A673 (cell line): ENCODE measurements at regions of chr19 and their contacts with region 1.

Region 1: DNA sequence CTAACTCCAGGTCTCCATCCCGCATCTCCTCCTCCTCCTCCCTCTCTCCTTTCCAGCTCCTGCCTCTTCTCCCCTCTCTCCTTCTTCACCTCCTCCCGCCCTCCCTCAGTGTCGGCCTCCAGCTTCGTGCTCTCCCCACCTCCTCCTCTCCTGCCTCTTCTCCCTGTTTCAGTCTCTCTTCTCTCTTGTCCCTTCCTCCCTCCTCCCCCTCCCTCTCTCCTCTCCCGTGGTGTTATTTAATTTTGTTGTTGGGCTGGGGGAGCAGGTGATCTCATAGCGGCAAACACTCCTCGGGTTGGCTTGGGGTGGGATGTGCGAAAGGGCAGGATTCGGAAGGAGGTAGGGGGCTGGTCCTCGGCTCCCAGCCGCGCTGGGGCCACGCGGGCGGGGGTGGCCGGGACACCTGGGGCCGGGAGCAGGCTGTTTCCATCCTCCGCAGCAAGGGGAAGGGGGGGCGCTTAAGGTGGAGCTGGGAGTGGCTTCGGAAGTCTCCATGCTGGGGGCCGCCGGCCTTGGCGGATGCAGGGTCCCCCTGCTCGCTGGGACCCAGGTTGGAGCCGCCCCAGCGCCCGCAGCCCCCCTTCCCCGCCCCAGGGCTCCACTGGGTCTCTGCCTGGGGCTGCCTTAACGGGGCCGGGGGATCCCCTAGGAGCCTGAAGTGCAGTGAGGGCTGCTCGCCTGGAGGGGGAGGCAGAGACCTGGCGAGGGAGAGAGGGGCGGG is at the start of gene CA11:
- DNase-seq: peak; percentile 97
- H3K4me3 ChIP-seq: peak within 1 kb of the TSS; percentile 62
- H3K27ac ChIP-seq: peak within 1 kb of the TSS; percentile 77
- H3K4me1 ChIP-seq: peaks cover 26% of the 10 kb centered on the region
- H3K27me3 ChIP-seq: no peaks in the 10 kb centered on the region
- CTCF ChIP-seq: peak; percentile 94
- total RNA-seq, gene CA11: 36.8 and 38.2 TPM in 2 replicates

Region 2: DNA sequence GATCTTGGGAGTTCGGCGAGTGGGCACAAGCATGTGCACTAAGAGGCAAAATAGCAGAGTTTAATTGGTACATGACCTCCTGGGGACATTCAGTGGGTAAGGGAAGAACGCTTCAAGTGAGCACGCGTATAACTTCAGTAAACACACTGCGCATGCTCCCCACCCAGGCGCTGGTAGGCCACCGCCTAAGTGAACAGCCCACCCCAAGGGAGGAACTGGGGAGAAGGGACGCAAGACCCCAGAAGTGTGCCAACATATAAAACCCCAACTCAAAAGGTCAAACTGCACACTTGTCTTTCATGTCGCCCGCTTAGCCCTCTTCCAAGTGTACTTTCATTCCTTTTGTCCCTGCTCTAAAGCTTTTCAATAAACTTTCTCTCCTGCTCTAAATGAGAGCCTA is 37.2 kb after region 1 on chr19:
- CTCF ChIA-PET with region 1: no interaction called
- POLR2A ChIA-PET with region 1: no interaction called
- intact Hi-C with region 1: no loop called
- DNase-seq: no peak
- H3K4me3 ChIP-seq: no peak overlapping the region
- H3K27ac ChIP-seq: no peak overlapping the region
- H3K4me1 ChIP-seq: no peaks in the 10 kb centered on the region
- H3K27me3 ChIP-seq: no peaks in the 10 kb centered on the region
- CTCF ChIP-seq: no peak

Region 3: DNA sequence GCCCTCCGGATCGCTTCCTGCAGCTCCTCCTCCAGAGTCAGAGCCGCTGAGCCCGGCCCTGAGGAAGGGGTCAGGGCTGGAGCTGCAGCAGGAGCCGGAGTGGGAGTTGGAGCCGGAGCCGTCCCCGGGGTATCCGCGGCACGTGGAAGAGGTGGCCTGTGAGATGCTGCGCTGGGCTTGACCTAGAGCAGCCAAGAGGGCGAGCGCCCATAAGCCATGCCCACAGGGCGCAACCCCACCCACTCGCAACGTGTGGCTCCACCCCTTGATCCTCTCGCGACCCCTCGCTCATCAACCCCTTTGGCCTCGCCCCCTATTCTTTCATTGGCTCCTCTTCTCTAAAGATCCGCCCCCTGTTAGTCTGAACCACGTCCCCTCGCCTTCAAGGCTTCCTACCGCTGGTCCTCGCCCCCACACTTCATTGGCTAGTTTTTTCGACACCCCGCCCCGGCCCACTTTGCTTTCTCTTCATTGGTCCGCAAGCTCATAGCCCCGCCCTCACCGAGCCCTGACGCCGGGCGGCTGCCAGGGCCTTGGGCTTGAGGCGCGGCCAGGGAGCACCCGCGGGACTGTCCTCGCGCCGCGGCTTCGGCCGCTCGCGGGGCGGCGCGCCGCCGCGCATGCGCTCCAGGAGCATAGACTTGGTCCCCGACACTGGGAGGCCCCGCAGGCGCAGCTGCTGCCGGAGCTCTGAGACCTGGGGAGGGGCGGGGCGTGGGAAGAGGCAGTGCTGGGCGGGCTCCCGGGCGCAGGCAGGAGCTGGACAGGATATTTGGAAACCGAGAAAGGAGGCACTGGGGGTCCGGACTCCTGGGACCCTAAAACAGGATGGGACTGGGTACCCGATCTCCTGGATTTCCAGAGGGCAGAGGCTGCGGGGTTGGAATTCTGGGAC is 68.0 kb after region 1 on chr19:
- CTCF ChIA-PET with region 1: interaction called, 4 read pairs
- POLR2A ChIA-PET with region 1: no interaction called
- intact Hi-C with region 1: loop called (anchors 5 kb)
- DNase-seq: peak; percentile 100
- H3K4me3 ChIP-seq: peak overlapping the region; percentile 66
- H3K27ac ChIP-seq: peak overlapping the region; percentile 88
- H3K4me1 ChIP-seq: peaks cover 33% of the 10 kb centered on the region
- H3K27me3 ChIP-seq: no peaks in the 10 kb centered on the region
- CTCF ChIP-seq: no peak

Region 4: DNA sequence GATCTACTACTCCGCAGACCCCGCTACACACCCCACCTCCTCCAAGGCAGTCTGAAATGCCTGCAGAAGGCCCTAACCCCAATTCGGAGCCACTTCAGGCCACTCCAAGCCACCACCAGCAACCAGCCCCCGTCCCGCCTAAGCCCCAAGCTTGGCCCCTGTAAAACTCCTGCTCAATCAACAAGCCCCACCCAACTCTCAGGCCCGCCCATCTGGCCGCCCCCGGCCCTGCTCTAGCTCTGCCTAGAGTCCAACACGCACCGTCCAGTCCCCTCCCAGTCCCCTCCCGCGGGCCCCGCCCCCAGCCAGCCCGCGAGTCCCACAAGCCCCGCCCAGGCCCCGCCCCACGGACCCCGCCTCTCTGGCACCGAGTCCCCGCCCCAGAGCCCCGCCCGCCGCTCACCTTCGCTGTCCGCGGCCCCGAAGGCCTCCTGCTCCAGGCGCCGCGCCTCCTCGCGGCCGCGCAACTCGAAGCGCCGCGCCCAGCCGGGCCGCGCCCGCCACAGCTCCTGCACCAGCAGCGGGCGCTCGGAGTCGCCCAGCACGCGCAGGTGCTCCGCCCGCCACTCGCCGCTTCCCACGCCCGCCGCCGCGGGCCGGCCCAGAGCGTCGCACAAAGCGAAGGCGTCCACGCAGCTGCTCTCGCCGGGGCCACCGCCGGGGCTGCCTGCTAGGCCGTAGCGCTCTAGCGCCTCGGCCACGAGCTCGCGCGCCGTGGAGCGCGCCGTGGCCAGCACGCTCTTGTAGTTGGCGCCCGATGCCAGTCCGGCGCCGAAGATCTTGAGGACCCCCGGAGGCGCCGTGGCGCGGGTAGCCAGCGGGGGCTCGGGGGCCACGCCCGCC is 92.6 kb after region 1 on chr19:
- CTCF ChIA-PET with region 1: no interaction called
- POLR2A ChIA-PET with region 1: no interaction called
- intact Hi-C with region 1: loop called (anchors 5 kb)
- DNase-seq: peak; percentile 94
- H3K4me3 ChIP-seq: peak overlapping the region; percentile 59
- H3K27ac ChIP-seq: peak overlapping the region; percentile 73
- H3K4me1 ChIP-seq: peaks cover 21% of the 10 kb centered on the region
- H3K27me3 ChIP-seq: no peaks in the 10 kb centered on the region
- CTCF ChIP-seq: peak; percentile 45; the same call in 1 of the 2 replicates

Region 5: GRCh38 chr19:48835734-48836088 is 189.6 kb after region 1 on chr19:
- CTCF ChIA-PET with region 1: interaction called, 3 read pairs
- POLR2A ChIA-PET with region 1: no interaction called
- intact Hi-C with region 1: loop called (anchors 5 kb)
- DNase-seq: peak; percentile 88
- H3K4me3 ChIP-seq: peak overlapping the region; percentile 41
- H3K27ac ChIP-seq: no peak overlapping the region
- H3K4me1 ChIP-seq: peaks cover 13% of the 10 kb centered on the region
- H3K27me3 ChIP-seq: no peaks in the 10 kb centered on the region
- CTCF ChIP-seq: peak; percentile 95

Region 6: GRCh38 chr19:48965040-48965805 is 319.1 kb after region 1 on chr19 and contains the start of gene FTL:
- CTCF ChIA-PET with region 1: interaction called, 7 read pairs
- POLR2A ChIA-PET with region 1: interaction called, 7 read pairs
- intact Hi-C with region 1: loop called (anchors 10 kb)
- DNase-seq: peak; percentile 97
- H3K4me3 ChIP-seq: peak within 1 kb of the TSS; percentile 77
- H3K27ac ChIP-seq: peak within 1 kb of the TSS; percentile 95
- H3K4me1 ChIP-seq: peaks cover 42% of the 10 kb centered on the region
- H3K27me3 ChIP-seq: no peaks in the 10 kb centered on the region
- CTCF ChIP-seq: no peak
- total RNA-seq, gene FTL: 1,330 and 1,983 TPM in 2 replicates